Activated CD8-positive, alpha-beta memory T cell treated with anti-CD3 and anti-CD28 coated beads, Interleukin-2, amount 10 ng/mL, durations not matched to agents 7 days and 5 days (primary cell): ENCODE measurements at regions of chr11 and their contacts with region 1.

Region 1: DNA sequence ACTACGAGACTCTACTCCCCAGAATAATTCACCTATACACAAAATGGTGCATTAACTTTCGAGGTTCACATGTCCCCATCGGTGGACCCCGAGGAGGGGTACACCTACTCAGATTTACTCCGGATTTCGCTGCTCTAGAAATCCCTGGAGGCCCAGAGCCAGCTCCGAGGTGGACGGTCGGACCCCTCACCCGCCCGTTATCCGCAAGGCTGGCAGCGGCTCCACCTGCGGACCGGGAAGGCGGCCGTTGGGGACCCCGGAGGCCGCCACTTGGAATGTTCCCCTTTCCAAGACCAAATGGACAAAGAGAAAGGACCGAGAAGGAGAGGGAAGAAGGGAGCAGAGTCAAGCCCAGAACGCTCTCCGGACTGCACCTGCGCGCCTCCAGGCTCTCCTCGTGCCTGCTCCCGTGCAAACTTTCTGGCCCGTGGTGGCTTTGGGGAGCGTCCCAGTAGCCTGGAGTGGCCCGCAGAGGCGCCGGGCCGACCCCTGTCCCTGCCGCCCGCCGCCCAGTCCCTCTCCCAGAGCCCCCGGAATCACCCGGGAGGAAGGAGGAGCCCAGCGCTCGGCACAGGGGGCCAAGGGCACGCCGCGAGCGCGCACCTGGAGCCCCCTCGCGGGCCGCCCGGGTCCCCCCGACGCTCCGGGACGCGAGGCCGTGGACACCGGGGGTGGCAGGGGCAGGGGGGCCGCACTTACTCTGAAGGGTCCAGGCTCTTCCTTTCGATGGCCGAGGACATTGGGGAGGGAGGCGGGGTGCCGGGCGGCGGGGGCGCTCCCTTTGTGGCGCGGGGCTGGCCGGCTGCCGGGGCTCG is 23.0 kb downstream of the LMO2 start:
- DNase-seq: no peak
- ATAC-seq: no peak
- H3K4me3 Mint-ChIP-seq: no peak overlapping the region
- H3K27ac Mint-ChIP-seq: no peak overlapping the region
- H3K4me1 Mint-ChIP-seq: peaks cover 10% of the 10 kb centered on the region
- H3K27me3 Mint-ChIP-seq: peaks cover 80% of the 10 kb centered on the region

Region 2: GRCh38 chr11:33857933-33858371 is 10.9 kb before region 1 on chr11:
- CTCF ChIA-PET with region 1: interaction called, 11 read pairs
- DNase-seq: peak; percentile 75
- ATAC-seq: peak; percentile 78
- H3K4me3 Mint-ChIP-seq: no peak overlapping the region
- H3K27ac Mint-ChIP-seq: no peak overlapping the region
- H3K4me1 Mint-ChIP-seq: no peaks in the 10 kb centered on the region
- H3K27me3 Mint-ChIP-seq: peaks cover 77% of the 10 kb centered on the region